ENCODE measurements at regions of chrX and their contacts with region 1.

Region 1: GRCh38 chrX:2640275-2641150 is 50.6 kb upstream of the CD99 start:
- DNase-seq: no peak
- H3K4me3 ChIP-seq: no peak overlapping the region
- H3K27ac ChIP-seq: no peak overlapping the region
- H3K4me1 ChIP-seq: no peaks in the 10 kb centered on the region
- H3K27me3 ChIP-seq: no peaks in the 10 kb centered on the region
- CTCF ChIP-seq: no peak
- EP300 ChIP-seq: no peak
- POLR2A ChIP-seq: no peak

Region 2: GRCh38 chrX:2819345-2820135 is 179.0 kb after region 1 on chrX:
- intact Hi-C with region 1: loop called (anchors 5 to 10 kb)
- DNase-seq: no peak
- H3K4me3 ChIP-seq: no peak overlapping the region
- H3K27ac ChIP-seq: no peak overlapping the region
- H3K4me1 ChIP-seq: no peaks in the 10 kb centered on the region
- H3K27me3 ChIP-seq: no peaks in the 10 kb centered on the region
- CTCF ChIP-seq: peak in 1 of 3 donors; percentile 39
- EP300 ChIP-seq: no peak
- POLR2A ChIP-seq: no peak

Measured in ovary (tissue), 10 donors.